ENCODE measurements at regions of chr6 and their contacts with region 1.

Region 1: GRCh38 chr6:89242574-89243330 is 25.6 kb upstream of the GABRR1 start:
- DNase-seq: peak in 1 of 2 experiments; percentile 34
- H3K4me3 ChIP-seq: peak overlapping the region in 1 of 4 experiments; percentile 24; a peak in 2 of 8 replicates
- H3K27ac ChIP-seq: no peak overlapping the region
- H3K4me1 ChIP-seq: peaks cover 0 to 3% (median under 1%) of the 10 kb centered on the region in 4 experiments; a peak in 3 of 7 replicates
- H3K27me3 ChIP-seq: peaks cover 0 to 5% (median 3%) of the 10 kb centered on the region in 4 experiments; a peak in 5 of 7 replicates
- CTCF ChIP-seq: peak in 2 of 3 experiments; percentile 18 to 20; a peak in 2 of 4 replicates
- EP300 ChIP-seq: no peak
- POLR2A ChIP-seq: no peak
- RAD21 ChIP-seq: peak; percentile 54 to 58

Region 2: GRCh38 chr6:87608802-87609201 is 1634.0 kb before region 1 on chr6:
- CTCF ChIA-PET with region 1: no interaction called
- POLR2A ChIA-PET with region 1: no interaction called
- DNase-seq: no peak
- H3K4me3 ChIP-seq: no peak overlapping the region
- H3K27ac ChIP-seq: no peak overlapping the region
- H3K4me1 ChIP-seq: peaks cover 0 to 4% (median 0%) of the 10 kb centered on the region in 4 experiments; a peak in 2 of 7 replicates
- H3K27me3 ChIP-seq: no peaks in the 10 kb centered on the region
- CTCF ChIP-seq: no peak
- EP300 ChIP-seq: no peak
- POLR2A ChIP-seq: no peak
- RAD21 ChIP-seq: no peak

Region 3: GRCh38 chr6:89217299-89217910 is 25.3 kb before region 1 on chr6 and contains the start of gene GABRR1:
- CTCF ChIA-PET with region 1: interaction called, 10 read pairs
- POLR2A ChIA-PET with region 1: no interaction called
- DNase-seq: no peak
- H3K4me3 ChIP-seq: no peak within 1 kb of the TSS
- H3K27ac ChIP-seq: no peak within 1 kb of the TSS
- H3K4me1 ChIP-seq: peaks cover 0 to 7% (median 3%) of the 10 kb centered on the region in 4 experiments; a peak in 5 of 7 replicates
- H3K27me3 ChIP-seq: no peaks in the 10 kb centered on the region
- CTCF ChIP-seq: no peak
- EP300 ChIP-seq: no peak
- POLR2A ChIP-seq: no peak
- RAD21 ChIP-seq: no peak
- total RNA-seq, gene GABRR1: 0.17 and 0.60 TPM in 2 replicates

Region 4: DNA sequence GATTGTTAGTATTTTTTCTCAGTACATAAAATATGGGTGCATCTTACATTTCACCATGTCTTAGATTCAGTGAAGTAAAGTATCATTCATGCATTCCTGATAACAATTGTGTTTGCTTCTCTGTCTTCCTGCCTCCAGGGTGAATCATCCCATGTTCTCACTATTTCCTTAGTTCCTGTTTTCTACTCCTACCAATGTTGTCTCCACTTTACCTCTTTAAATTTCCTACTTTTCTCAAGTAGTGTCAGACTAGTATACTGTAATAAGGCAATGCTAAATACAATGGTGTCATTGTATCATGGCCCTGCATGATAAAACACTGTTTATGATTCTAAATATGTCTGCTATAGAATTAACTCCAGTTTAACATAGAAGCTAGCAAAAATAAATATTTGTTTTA is 11.8 kb after region 1 on chr6:
- CTCF ChIA-PET with region 1: interaction called, 56 read pairs
- POLR2A ChIA-PET with region 1: no interaction called
- DNase-seq: no peak
- H3K4me3 ChIP-seq: no peak overlapping the region
- H3K27ac ChIP-seq: no peak overlapping the region
- H3K4me1 ChIP-seq: no peaks in the 10 kb centered on the region
- H3K27me3 ChIP-seq: no peaks in the 10 kb centered on the region
- CTCF ChIP-seq: no peak
- EP300 ChIP-seq: no peak
- POLR2A ChIP-seq: no peak
- RAD21 ChIP-seq: no peak